AG04450 (cell line): ENCODE measurements at regions of chr14 and their contacts with region 1.

Region 1: DNA sequence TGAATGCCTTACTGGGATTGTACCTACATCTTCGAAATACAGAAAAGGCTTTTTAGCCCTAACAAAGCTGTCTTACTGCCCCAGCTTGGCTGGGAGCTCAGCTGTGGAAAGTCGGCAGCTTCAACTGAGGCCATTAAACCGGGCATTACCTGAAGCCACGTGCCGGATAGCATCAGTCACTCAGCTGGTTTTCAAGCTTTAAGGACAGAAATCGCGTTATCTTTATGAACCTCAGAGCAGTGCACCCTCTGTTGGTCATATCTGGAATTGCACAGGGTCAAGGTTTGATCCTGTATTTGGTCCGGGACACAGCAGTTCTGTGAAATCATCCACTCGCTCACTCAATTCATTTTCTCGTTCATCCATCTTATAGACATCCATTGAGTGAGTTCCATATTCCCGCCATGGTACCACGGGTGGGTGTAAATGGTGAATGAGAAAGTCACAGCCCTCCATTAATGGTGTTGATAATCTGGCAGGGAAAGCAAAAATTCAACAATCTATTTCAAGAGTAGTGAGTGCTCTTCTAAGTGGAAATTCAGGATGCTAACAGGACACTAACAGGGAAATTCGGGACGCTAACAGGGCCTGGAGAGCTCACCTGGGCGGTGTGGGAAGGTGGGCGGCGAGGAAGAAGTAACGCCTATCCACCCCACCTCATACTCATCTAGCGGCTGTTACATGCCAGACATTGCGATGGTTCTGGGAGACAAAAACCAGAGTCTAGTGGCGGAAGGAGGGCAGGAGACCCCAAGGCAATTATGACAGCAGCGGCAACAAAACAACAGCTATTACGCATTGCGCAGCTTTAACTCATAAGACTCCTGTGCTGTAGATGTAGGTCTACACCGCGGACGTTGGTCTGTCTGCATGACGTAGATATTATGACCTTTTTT is 60.6 kb upstream of the TCL1A start:
- DNase-seq: no peak
- H3K4me3 ChIP-seq: no peak overlapping the region
- H3K27ac ChIP-seq: no peak overlapping the region
- H3K27me3 ChIP-seq: no peaks in the 10 kb centered on the region
- CTCF ChIP-seq: peak; percentile 91

Region 2: DNA sequence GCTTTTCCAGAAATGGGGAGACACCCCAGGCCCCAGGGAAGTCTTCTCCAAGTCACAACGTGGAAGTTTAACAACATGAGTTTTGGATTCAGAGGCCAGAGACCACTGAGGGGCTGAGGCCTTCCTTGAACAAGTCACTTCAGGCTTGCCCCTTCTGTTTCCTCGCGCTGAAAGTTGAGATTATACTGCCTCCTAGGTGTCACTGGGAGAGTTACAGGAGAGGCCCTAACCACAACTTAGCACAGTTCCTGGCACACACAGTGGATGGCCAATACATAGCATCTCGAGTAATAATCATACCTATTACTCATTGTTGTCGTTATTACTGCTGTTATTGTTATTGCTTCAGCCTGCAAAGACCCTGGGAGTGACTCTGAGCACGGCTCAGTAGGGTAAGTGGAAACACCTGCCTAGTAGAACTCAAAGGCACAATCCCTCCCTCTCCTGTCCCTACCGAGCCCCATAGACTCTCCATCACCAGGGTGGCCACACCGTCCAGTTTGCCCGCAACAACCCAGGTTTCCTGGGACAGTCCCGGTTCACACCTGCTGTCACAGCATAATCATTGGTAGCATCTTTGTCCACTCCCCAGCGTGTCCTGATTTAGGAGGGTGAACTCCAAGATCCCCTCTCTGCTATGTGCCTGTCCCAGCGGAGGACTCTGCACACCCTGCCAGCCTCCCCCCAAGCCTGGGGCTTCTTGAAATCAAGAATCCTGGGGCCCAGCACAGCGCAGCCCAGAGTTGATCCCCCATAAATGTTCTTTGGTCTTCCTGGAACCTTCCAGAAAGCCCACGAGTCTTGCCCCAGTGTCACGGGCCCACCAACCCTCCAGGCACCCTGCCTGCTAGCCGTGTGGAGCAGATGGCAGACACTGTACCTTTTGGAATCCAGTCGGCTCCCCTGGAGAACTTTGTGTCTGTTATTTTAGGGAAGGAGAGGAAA is 343.0 kb before region 1 on chr14:
- CTCF ChIA-PET with region 1: interaction called, 12 read pairs
- POLR2A ChIA-PET with region 1: no interaction called
- DNase-seq: no peak
- H3K4me3 ChIP-seq: no peak overlapping the region
- H3K27ac ChIP-seq: no peak overlapping the region
- H3K27me3 ChIP-seq: no peaks in the 10 kb centered on the region
- CTCF ChIP-seq: peak; percentile 48

Region 3: GRCh38 chr14:95561001-95561412 is 213.5 kb before region 1 on chr14:
- CTCF ChIA-PET with region 1: interaction called, 85 read pairs
- POLR2A ChIA-PET with region 1: no interaction called
- DNase-seq: peak; percentile 68
- H3K4me3 ChIP-seq: no peak overlapping the region
- H3K27ac ChIP-seq: no peak overlapping the region
- H3K27me3 ChIP-seq: peaks cover 2% of the 10 kb centered on the region
- CTCF ChIP-seq: peak; percentile 97

Region 4: DNA sequence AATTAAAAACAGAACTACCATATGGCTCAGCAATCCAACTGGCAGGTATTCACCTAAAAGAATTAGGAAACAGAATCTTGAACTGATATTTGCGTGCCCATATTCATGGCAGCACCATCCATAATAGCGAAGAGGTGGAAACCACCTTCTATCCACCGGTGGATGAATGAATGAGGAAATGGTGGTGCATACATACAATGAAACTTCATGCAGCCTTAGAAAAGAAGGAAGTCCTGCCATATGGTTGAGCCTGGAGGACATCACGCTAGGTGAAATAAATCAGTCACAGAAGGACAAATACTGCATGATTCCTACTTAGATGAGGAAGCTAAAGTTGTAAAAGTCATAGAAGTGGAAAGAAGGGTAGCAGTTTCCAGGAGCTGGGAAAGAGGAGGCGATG is 67.2 kb before region 1 on chr14:
- CTCF ChIA-PET with region 1: no interaction called
- POLR2A ChIA-PET with region 1: no interaction called
- DNase-seq: no peak
- H3K4me3 ChIP-seq: no peak overlapping the region
- H3K27ac ChIP-seq: no peak overlapping the region
- H3K27me3 ChIP-seq: no peaks in the 10 kb centered on the region
- CTCF ChIP-seq: no peak

Region 5: GRCh38 chr14:95741038-95741490 is 33.4 kb before region 1 on chr14:
- CTCF ChIA-PET with region 1: no interaction called
- POLR2A ChIA-PET with region 1: no interaction called
- DNase-seq: no peak
- H3K4me3 ChIP-seq: no peak overlapping the region
- H3K27ac ChIP-seq: no peak overlapping the region
- H3K27me3 ChIP-seq: no peaks in the 10 kb centered on the region
- CTCF ChIP-seq: no peak